ENCODE measurements at regions of chr7 and their contacts with region 1.

Region 1: GRCh38 chr7:138738551-138739335 is 37.6 kb upstream of the SVOPL start:
- DNase-seq: peak; percentile 88
- ATAC-seq: peak; percentile 98
- H3K4me3 ChIP-seq: no peak overlapping the region
- H3K27ac ChIP-seq: no peak overlapping the region
- H3K4me1 ChIP-seq: no peaks in the 10 kb centered on the region; the same call in 1 of the 2 replicates
- H3K27me3 ChIP-seq: no peaks in the 10 kb centered on the region
- CTCF ChIP-seq: peak; percentile 93

Region 2: DNA sequence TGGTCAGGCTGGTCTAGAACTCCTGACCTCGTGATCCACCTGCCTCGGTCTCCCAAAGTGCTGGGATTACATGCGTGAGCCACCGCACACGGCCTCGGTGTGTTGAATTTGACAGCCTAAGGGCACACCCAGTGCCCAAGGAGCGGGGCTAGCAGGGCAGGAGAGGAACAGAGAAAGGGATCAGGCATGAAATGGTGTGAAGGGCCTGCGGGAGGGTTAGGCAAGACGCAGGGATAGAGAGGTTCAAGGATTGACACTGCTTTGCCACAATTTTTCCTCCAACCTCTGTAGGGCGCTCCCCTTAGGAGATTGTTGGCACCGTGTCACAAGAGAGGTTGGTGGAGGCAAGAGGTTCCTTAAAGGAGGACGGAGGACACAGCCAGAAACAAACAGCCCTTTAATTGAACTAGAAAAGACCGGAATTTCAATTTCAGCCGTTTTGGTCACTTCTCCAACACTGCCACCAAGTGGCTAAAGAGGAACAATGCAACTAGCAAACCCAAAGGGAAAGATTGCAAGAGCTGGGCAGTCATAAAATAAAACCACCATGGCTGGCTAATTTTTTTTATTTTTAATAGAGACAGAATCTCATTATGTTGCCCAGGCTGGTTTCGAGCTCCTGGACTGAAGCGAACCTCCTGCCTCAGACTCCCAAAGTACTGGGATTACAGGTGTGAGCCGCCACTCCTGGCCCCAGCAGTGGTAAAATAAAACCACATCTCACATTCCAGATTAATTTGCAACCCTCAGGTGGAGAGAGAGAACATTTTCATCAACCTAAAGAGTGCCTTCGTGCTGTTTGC is 730.0 kb before region 1 on chr7:
- CTCF ChIA-PET with region 1: interaction called, 3 read pairs
- POLR2A ChIA-PET with region 1: no interaction called
- intact Hi-C with region 1: loop called (anchors 2 kb)
- DNase-seq: peak; percentile 75
- ATAC-seq: peak; percentile 65
- H3K4me3 ChIP-seq: no peak overlapping the region
- H3K27ac ChIP-seq: no peak overlapping the region
- H3K4me1 ChIP-seq: peaks cover 4% of the 10 kb centered on the region; the same call in 1 of the 2 replicates
- H3K27me3 ChIP-seq: no peaks in the 10 kb centered on the region
- CTCF ChIP-seq: peak; percentile 86

Region 3: DNA sequence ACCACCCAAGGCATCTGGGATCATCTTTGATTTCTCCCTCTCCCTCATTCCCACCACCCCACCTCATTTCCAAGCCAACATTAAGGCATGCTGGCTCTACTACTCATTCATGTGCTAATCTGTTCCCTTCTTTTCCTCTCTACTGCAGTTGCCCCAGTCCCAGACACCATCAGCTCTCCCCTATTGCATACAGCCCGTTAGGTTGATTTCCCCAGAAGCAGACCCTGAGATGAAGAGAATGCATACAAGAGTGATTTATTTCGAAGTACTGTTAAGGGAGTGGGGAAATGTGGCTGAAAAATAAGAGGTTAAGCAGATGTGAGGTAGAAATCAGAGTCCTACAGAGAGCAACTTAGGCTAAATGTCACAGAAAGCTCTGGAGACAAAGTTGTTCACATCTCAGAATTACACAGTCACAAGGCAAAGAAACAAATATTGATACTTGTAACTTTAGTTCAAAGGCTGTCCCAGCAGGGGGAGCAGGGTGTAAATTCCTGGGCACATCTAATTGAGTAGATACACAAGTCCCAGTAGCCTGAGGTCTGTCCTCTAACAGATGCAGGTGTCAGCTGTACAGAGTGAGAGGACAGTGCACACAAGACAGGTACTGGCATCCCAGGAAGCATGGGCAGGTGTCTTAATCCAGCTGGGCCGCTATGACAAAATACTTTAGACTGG is 641.5 kb before region 1 on chr7:
- CTCF ChIA-PET with region 1: no interaction called
- POLR2A ChIA-PET with region 1: no interaction called
- intact Hi-C with region 1: loop called (anchors 1 kb)
- DNase-seq: peak; percentile 49
- ATAC-seq: 0 out of 2 replicates have a peak, but pooled peaks have one; percentile 29
- H3K4me3 ChIP-seq: no peak overlapping the region
- H3K27ac ChIP-seq: no peak overlapping the region
- H3K4me1 ChIP-seq: peaks cover 5% of the 10 kb centered on the region
- H3K27me3 ChIP-seq: no peaks in the 10 kb centered on the region
- CTCF ChIP-seq: peak; percentile 59

Region 4: GRCh38 chr7:138161600-138162081 is 577.1 kb before region 1 on chr7:
- CTCF ChIA-PET with region 1: interaction called, 55 read pairs
- POLR2A ChIA-PET with region 1: interaction called, 3 read pairs
- intact Hi-C with region 1: loop called (anchors 1 kb)
- DNase-seq: peak; percentile 90
- ATAC-seq: peak; percentile 93
- H3K4me3 ChIP-seq: peak overlapping the region; percentile 23; the same call in 1 of the 2 replicates
- H3K27ac ChIP-seq: no peak overlapping the region
- H3K4me1 ChIP-seq: peaks cover 4% of the 10 kb centered on the region; the same call in 1 of the 2 replicates
- H3K27me3 ChIP-seq: no peaks in the 10 kb centered on the region
- CTCF ChIP-seq: peak; percentile 82

Region 5: GRCh38 chr7:138257459-138258196 is 481.1 kb before region 1 on chr7:
- CTCF ChIA-PET with region 1: no interaction called
- POLR2A ChIA-PET with region 1: no interaction called
- intact Hi-C with region 1: no loop called
- DNase-seq: peak; percentile 17
- ATAC-seq: no peak
- H3K4me3 ChIP-seq: no peak overlapping the region
- H3K27ac ChIP-seq: no peak overlapping the region
- H3K4me1 ChIP-seq: no peaks in the 10 kb centered on the region
- H3K27me3 ChIP-seq: no peaks in the 10 kb centered on the region
- CTCF ChIP-seq: no peak

Region 6: GRCh38 chr7:138449580-138449979 is 289.2 kb before region 1 on chr7:
- CTCF ChIA-PET with region 1: interaction called, 4 read pairs
- POLR2A ChIA-PET with region 1: no interaction called
- intact Hi-C with region 1: loop called (anchors 1 kb)
- DNase-seq: no peak
- ATAC-seq: no peak
- H3K4me3 ChIP-seq: no peak overlapping the region
- H3K27ac ChIP-seq: no peak overlapping the region
- H3K4me1 ChIP-seq: no peaks in the 10 kb centered on the region
- H3K27me3 ChIP-seq: no peaks in the 10 kb centered on the region
- CTCF ChIP-seq: peak; percentile 54

Region 7: DNA sequence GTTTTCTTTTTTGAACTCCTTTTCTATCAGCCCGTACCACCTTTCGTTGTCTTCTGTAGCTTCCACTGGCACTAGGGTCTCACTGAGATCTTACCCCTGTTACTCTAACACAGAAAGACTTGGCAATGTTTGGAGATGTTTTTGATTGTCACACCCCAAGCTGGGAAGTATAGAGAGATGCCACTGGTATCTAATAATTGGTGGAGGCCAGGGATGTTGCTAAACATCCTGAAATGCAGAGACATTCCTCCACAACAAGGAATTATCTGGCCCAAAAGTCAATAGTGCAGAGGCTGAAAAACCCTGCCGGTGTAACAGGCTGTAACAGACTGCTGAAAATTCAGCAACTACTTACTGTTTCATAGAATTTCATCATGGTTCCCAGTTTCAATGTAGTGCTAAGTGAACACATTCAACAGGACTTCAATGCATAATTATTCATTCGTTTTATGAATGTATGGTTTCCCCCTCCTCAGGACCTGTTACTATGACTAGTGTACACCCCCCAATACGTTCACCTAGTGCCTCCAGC is 162.8 kb before region 1 on chr7:
- CTCF ChIA-PET with region 1: no interaction called
- POLR2A ChIA-PET with region 1: no interaction called
- intact Hi-C with region 1: loop called (anchors 10 kb)
- DNase-seq: no peak
- ATAC-seq: no peak
- H3K4me3 ChIP-seq: no peak overlapping the region
- H3K27ac ChIP-seq: no peak overlapping the region
- H3K4me1 ChIP-seq: no peaks in the 10 kb centered on the region
- H3K27me3 ChIP-seq: no peaks in the 10 kb centered on the region
- CTCF ChIP-seq: no peak

Measured in PC-3 (cell line).